CD14-positive monocyte (primary cell): ENCODE measurements at regions of chr7 and their contacts with region 1.

Region 1: DNA sequence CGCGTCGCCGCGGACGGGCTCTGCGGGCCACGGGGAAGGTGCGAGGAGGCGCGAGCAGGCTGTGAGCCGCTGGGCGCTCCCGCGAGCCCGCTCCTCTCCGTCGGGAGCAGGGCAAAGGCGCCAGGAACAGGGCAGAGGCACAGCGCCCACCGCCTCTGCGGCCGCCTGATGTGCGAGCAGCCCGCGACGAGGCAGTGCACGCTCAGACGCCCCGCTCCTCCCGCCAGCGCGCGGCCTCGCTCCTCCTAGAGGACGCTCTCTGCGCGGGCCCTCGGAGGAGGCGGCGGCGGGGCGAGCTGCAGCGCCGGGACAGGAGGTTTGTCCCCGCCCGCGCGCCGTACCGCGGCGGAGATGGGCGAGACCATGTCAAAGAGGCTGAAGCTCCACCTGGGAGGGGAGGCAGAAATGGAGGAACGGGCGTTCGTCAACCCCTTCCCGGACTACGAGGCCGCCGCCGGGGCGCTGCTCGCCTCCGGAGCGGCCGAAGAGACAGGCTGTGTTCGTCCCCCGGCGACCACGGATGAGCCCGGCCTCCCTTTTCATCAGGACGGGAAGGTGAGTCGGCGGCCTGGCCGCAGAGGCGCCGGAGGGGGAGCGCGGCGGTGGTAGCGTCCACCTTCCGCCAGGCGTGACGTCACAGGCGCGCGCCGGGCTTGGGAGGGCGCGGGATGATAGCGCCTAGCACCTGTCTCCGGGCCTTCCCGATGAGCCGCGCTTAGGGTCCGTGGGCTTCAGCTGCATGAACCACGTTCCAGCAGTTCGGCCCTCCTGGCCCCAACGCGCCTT is 731 bp downstream of the LANCL2 start:
- DNase-seq: peak; percentile 90 to 95 (median 95)
- H3K4me3 ChIP-seq: peak overlapping the region; percentile 78 to 86 (median 80)
- H3K4me3 Mint-ChIP-seq: peak overlapping the region; percentile 87
- H3K27ac ChIP-seq: peak overlapping the region; percentile 78 to 94
- H3K27ac Mint-ChIP-seq: peak overlapping the region; percentile 91 to 97 (median 96)
- H3K4me1 ChIP-seq: peaks cover 18 to 20% of the 10 kb centered on the region in 2 donors
- H3K4me1 Mint-ChIP-seq: peaks cover 20% of the 10 kb centered on the region
- H3K27me3 ChIP-seq: peaks cover 0 to 11% of the 10 kb centered on the region in 2 donors
- H3K27me3 Mint-ChIP-seq: peaks cover 4 to 9% (median 7%) of the 10 kb centered on the region in 3 donors
- CTCF ChIP-seq: peak; percentile 21

Region 2: GRCh38 chr7:55572378-55573233 is 206.7 kb after region 1 on chr7 and contains the start of gene VOPP1:
- intact Hi-C with region 1: loop called in 1 of 2 experiments (anchors 10 kb)
- DNase-seq: peak; percentile 54 to 70 (median 61)
- H3K4me3 ChIP-seq: peak within 1 kb of the TSS; percentile 60 to 86 (median 66)
- H3K4me3 Mint-ChIP-seq: peak within 1 kb of the TSS; percentile 96 to 99
- H3K27ac ChIP-seq: peak within 1 kb of the TSS; percentile 75 to 88
- H3K27ac Mint-ChIP-seq: peak within 1 kb of the TSS; percentile 91 to 98 (median 96)
- H3K4me1 ChIP-seq: peaks cover 33 to 35% of the 10 kb centered on the region in 2 donors
- H3K4me1 Mint-ChIP-seq: peaks cover 46% of the 10 kb centered on the region
- H3K27me3 ChIP-seq: peaks cover 0 to 3% of the 10 kb centered on the region in 2 donors
- H3K27me3 Mint-ChIP-seq: peaks cover 11 to 13% (median 11%) of the 10 kb centered on the region in 3 donors
- CTCF ChIP-seq: no peak
- polyA plus RNA-seq, gene VOPP1: 16.7 to 22.1 (median 18.0) TPM

Region 3: GRCh38 chr7:55593515-55594318 is 227.8 kb after region 1 on chr7:
- intact Hi-C with region 1: loop called in 1 of 2 experiments (anchors 10 kb)
- DNase-seq: peak; percentile 39 to 82 (median 60)
- H3K4me3 ChIP-seq: no peak overlapping the region
- H3K4me3 Mint-ChIP-seq: no peak overlapping the region
- H3K27ac ChIP-seq: no peak overlapping the region
- H3K27ac Mint-ChIP-seq: no peak overlapping the region
- H3K4me1 ChIP-seq: no peaks in the 10 kb centered on the region
- H3K4me1 Mint-ChIP-seq: peaks cover 8% of the 10 kb centered on the region
- H3K27me3 ChIP-seq: no peaks in the 10 kb centered on the region
- H3K27me3 Mint-ChIP-seq: peaks cover 4 to 15% (median 8%) of the 10 kb centered on the region in 3 donors
- CTCF ChIP-seq: peak; percentile 84

Region 4: GRCh38 chr7:55951637-55952351 is 585.9 kb after region 1 on chr7 and contains the start of gene MRPS17:
- intact Hi-C with region 1: loop called in 1 of 2 experiments (anchors 5 kb)
- DNase-seq: peak; percentile 80 to 83 (median 81)
- H3K4me3 ChIP-seq: peak within 1 kb of the TSS; percentile 58 to 77 (median 61)
- H3K4me3 Mint-ChIP-seq: peak within 1 kb of the TSS; percentile 94 to 98
- H3K27ac ChIP-seq: peak within 1 kb of the TSS; percentile 68 to 83
- H3K27ac Mint-ChIP-seq: peak within 1 kb of the TSS; percentile 93 to 98 (median 94)
- H3K4me1 ChIP-seq: peaks cover 7 to 11% of the 10 kb centered on the region in 2 donors
- H3K4me1 Mint-ChIP-seq: peaks cover 13% of the 10 kb centered on the region
- H3K27me3 ChIP-seq: no peaks in the 10 kb centered on the region
- H3K27me3 Mint-ChIP-seq: peaks cover 0 to 3% (median 0%) of the 10 kb centered on the region in 3 donors
- CTCF ChIP-seq: no peak
- polyA plus RNA-seq, gene MRPS17: 6.1 to 14.6 (median 10.9) TPM

Region 5: DNA sequence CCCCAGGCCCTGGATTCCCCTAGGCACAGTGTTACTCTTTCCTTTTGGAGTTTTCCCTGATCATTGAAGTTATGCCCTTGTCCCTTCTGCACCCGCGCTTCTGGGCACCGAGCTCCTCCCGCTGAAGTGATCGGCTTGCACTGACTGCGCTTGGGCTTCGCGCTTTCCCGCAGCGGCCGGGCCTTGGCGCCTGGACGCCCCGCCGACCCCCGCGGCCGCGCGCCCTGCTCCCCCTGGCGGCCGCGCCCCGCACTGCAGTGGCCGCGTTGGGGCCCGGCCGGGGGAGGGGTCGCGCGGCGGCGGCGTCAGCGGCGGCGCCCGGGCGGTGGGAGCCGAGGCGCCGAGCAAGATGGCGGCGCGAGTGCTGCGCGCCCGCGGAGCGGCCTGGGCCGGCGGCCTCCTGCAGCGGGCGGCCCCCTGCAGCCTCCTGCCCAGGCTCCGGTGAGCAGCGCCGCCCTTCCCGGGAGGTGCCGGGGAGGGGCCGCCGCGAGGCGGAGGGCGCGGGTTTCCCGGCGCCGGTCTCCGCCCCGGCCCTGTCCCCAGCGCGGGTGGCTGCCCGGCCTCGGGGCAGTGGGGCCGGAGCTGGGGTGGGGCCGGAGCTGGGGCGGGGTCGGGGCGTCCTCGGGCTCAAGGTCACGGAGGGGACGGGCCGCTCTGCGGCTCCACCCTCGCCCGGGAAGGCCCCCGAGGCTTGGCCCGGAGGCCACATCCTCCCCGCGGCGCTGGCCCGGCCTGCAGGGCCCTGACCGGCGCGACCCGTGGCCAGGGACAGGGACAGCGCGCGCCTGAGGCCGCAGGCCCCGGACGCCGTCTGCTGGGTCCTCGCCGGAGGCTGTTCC is 598.6 kb after region 1 on chr7 and contains the start of gene NIPSNAP2:
- intact Hi-C with region 1: loop called in 1 of 2 experiments (anchors 5 kb)
- DNase-seq: peak; percentile 58 to 78 (median 77)
- H3K4me3 ChIP-seq: peak within 1 kb of the TSS; percentile 64 to 79 (median 66)
- H3K4me3 Mint-ChIP-seq: peak within 1 kb of the TSS; percentile 88 to 94
- H3K27ac ChIP-seq: peak within 1 kb of the TSS; percentile 88 to 92
- H3K27ac Mint-ChIP-seq: peak within 1 kb of the TSS; percentile 90 to 97 (median 96)
- H3K4me1 ChIP-seq: peaks cover 18% of the 10 kb centered on the region in 2 donors
- H3K4me1 Mint-ChIP-seq: peaks cover 23% of the 10 kb centered on the region
- H3K27me3 ChIP-seq: peaks cover 0 to 5% of the 10 kb centered on the region in 2 donors
- H3K27me3 Mint-ChIP-seq: peaks cover 0 to 9% (median 7%) of the 10 kb centered on the region in 3 donors
- CTCF ChIP-seq: peak; percentile 56
- polyA plus RNA-seq, gene NIPSNAP2: 43.2 to 97.5 (median 88.0) TPM

Region 6: DNA sequence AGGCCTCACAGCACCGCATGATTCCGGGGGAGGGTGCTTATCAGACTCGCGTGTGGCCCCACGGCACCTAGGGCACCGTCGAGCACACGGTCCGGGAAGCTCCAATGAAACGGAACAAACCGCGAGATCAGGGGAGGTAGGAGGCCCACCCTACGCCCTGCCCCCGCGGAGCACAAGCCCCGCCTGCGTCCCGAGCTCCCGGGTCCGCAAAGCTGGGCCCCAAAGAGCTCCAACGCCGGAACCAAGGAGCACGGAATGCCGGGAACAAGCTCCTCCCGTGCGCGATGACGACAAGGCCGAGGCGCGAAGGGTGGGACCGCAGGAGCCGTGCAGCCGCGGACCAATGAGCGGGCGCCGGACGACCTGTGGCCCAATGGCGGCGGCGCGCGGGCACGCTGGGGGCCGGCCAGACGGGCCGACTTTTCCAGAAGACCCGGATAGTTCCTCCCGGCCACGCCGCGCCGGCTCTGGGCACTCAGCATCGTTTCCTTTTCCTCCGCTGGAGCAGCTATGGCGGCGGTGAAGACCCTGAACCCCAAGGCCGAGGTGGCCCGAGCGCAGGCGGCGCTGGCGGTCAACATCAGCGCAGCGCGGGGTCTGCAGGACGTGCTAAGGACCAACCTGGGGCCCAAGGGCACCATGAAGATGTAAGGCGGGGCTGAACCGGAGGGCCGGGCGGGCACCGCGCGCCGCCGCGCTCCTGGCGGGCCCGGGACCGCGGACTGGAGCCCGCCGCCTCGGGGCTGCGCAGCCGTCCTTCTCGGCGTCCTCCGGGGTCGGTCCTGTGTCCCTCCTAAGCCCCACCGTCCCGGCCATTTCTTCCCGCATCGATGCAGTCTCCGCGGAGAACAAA is 685.7 kb after region 1 on chr7 and contains the starts of genes CCT6A and PSPH:
- intact Hi-C with region 1: loop called in 1 of 2 experiments (anchors 5 kb)
- DNase-seq: peak; percentile 82 to 92 (median 85)
- H3K4me3 ChIP-seq: peak within 1 kb of the TSS; percentile 39 to 93 (median 86)
- H3K4me3 Mint-ChIP-seq: peak within 1 kb of the TSS; percentile 93 to 96
- H3K27ac ChIP-seq: peak within 1 kb of the TSS; percentile 86 to 94
- H3K27ac Mint-ChIP-seq: peak within 1 kb of the TSS; percentile 88 to 97 (median 95)
- H3K4me1 ChIP-seq: peaks cover 19 to 24% of the 10 kb centered on the region in 2 donors
- H3K4me1 Mint-ChIP-seq: peaks cover 25% of the 10 kb centered on the region
- H3K27me3 ChIP-seq: no peaks in the 10 kb centered on the region
- H3K27me3 Mint-ChIP-seq: no peaks in the 10 kb centered on the region
- CTCF ChIP-seq: no peak
- polyA plus RNA-seq, gene CCT6A: 62.3 to 81.4 (median 63.3) TPM
- polyA plus RNA-seq, gene PSPH: 1.7 to 6.7 (median 5.3) TPM

Region 7: GRCh38 chr7:56106108-56107073 is 740.5 kb after region 1 on chr7 and contains the start of gene CHCHD2:
- intact Hi-C with region 1: loop called (anchors 5 kb)
- DNase-seq: peak; percentile 98 to 99 (median 99)
- H3K4me3 ChIP-seq: peak within 1 kb of the TSS; percentile 62 to 97 (median 89)
- H3K4me3 Mint-ChIP-seq: peak within 1 kb of the TSS; percentile 95 to 99
- H3K27ac ChIP-seq: peak within 1 kb of the TSS; percentile 93 to 97
- H3K27ac Mint-ChIP-seq: peak within 1 kb of the TSS; percentile 96 to 99 (median 98)
- H3K4me1 ChIP-seq: peaks cover 22 to 24% of the 10 kb centered on the region in 2 donors
- H3K4me1 Mint-ChIP-seq: peaks cover 25% of the 10 kb centered on the region
- H3K27me3 ChIP-seq: no peaks in the 10 kb centered on the region
- H3K27me3 Mint-ChIP-seq: peaks cover 0 to 9% (median 2%) of the 10 kb centered on the region in 3 donors
- CTCF ChIP-seq: no peak
- polyA plus RNA-seq, gene CHCHD2: 241 to 500 (median 412) TPM